A549 (cell line): ENCODE measurements at regions of chr15 and their contacts with region 1.

Region 1: DNA sequence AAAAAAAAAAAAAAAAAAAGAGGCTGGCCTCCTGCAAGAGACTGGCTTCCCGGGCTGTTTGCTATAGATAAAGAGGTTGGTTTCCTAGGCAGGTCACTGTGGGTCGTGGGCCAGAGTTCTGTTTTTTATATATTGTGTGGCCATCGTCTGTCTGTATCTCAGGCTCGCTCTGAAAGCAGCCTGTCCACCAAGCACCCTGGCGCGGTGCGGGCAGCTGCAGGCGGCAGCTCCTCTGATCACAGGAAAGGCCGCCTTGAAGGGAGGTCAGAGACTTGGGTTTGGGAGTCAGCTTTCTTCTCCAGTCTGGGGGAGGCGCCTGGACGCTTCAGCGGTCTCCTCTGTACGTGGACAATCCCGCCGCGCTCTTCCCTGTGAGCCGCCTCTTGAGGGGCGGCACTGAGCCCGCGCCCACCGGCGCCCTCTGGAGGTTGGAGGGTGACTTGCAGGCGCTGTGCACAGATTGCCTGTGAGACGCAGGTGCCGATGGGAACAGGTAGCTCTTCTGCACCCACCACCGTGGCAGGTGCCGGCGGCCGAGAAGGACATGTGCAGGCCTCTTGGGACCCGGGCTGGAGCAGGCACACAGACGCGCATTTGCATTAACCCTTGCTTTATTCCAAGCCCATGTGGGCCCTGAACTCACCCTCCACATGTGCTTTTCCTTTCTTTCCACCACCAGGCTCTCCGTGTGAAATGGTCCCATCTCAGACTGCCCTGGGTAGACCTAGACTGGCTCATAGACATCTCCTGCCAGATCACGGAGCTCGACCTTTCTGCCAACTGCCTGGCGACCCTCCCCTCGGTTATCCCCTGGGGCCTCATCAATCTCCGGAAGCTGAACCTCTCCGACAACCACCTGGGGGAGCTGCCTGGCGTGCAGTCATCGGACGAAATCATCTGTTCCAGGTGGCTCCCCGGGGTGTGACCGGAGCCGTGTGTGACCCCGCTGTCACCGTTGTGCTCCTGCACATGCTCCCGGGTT is 89.3 kb downstream of the LRRK1 start:
- DNase-seq: peak; percentile 87 to 89
- ATAC-seq: peak; percentile 86 to 92
- H3K4me3 ChIP-seq: peak overlapping the region; percentile 55
- H3K27ac ChIP-seq: peak overlapping the region; percentile 81 to 82
- H3K4me1 ChIP-seq: peaks cover 13% of the 10 kb centered on the region; the same call in 2 of the 3 replicates
- CTCF ChIP-seq: peak; percentile 94
- EP300 ChIP-seq: no peak
- POLR2A ChIP-seq: peak; percentile 52
- RAD21 ChIP-seq: peak; percentile 58 to 59

Region 2: GRCh38 chr15:100635406-100636071 is 372.9 kb before region 1 on chr15:
- CTCF ChIA-PET with region 1: interaction called, 35 read pairs
- POLR2A ChIA-PET with region 1: interaction called, 4 read pairs
- DNase-seq: no peak
- ATAC-seq: no peak; a peak in 1 of 6 replicates
- H3K4me3 ChIP-seq: no peak overlapping the region
- H3K27ac ChIP-seq: no peak overlapping the region
- H3K4me1 ChIP-seq: no peaks in the 10 kb centered on the region
- CTCF ChIP-seq: no peak
- EP300 ChIP-seq: no peak
- POLR2A ChIP-seq: no peak
- RAD21 ChIP-seq: no peak

Region 3: GRCh38 chr15:100849252-100850171 is 158.9 kb before region 1 on chr15:
- CTCF ChIA-PET with region 1: interaction called, 11 read pairs
- POLR2A ChIA-PET with region 1: no interaction called
- DNase-seq: peak; percentile 82 to 96
- ATAC-seq: peak; percentile 98 to 99
- H3K4me3 ChIP-seq: peak overlapping the region; percentile 70
- H3K27ac ChIP-seq: peak overlapping the region; percentile 82 to 90
- H3K4me1 ChIP-seq: 0 out of 3 replicates have a peak, but pooled peaks cover 3% of the 10 kb centered on the region
- CTCF ChIP-seq: peak; percentile 63
- EP300 ChIP-seq: no peak
- POLR2A ChIP-seq: peak; percentile 77
- RAD21 ChIP-seq: peak; percentile 51 to 65

Region 4: GRCh38 chr15:100902436-100903167 is 105.8 kb before region 1 on chr15:
- CTCF ChIA-PET with region 1: interaction called, 69 read pairs
- POLR2A ChIA-PET with region 1: no interaction called
- DNase-seq: no peak
- ATAC-seq: no peak; a peak in 1 of 6 replicates
- H3K4me3 ChIP-seq: no peak overlapping the region
- H3K27ac ChIP-seq: no peak overlapping the region
- H3K4me1 ChIP-seq: no peaks in the 10 kb centered on the region
- CTCF ChIP-seq: no peak
- EP300 ChIP-seq: no peak
- POLR2A ChIP-seq: no peak
- RAD21 ChIP-seq: no peak

Region 5: GRCh38 chr15:100968050-100968966 is 40.1 kb before region 1 on chr15:
- CTCF ChIA-PET with region 1: interaction called, 26 read pairs
- POLR2A ChIA-PET with region 1: no interaction called
- DNase-seq: no peak
- ATAC-seq: no peak; a peak in 1 of 6 replicates
- H3K4me3 ChIP-seq: no peak overlapping the region
- H3K27ac ChIP-seq: no peak overlapping the region
- H3K4me1 ChIP-seq: peaks cover 5% of the 10 kb centered on the region; the same call in 1 of the 3 replicates
- CTCF ChIP-seq: no peak
- EP300 ChIP-seq: no peak
- POLR2A ChIP-seq: no peak
- RAD21 ChIP-seq: no peak

Region 6: DNA sequence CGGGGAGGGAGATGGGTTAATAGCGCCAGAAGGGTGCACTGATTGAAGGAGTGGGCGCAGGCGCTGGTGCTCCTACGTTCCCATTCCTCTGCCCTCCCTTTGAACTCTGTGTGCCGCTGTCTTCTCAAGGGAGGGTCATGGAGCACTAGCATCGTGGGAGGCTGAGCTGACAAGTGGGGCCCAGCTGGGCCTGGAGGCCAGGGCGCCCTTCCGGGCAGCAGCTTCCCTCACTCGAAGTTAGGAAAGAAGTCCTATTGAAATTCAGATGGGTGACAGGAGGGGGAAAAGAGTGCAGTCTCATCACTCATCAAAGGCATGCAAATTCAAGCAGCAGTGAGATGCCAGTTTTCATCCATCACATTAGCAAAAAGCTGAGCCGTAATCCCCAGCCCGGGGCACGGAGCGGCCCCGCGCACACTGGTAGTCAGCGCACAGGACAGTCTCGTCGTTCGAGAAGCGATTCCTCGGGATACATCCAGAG is 38.9 kb after region 1 on chr15:
- CTCF ChIA-PET with region 1: interaction called, 12 read pairs
- POLR2A ChIA-PET with region 1: no interaction called
- DNase-seq: no peak
- ATAC-seq: no peak
- H3K4me3 ChIP-seq: no peak overlapping the region
- H3K27ac ChIP-seq: no peak overlapping the region
- H3K4me1 ChIP-seq: no peaks in the 10 kb centered on the region
- CTCF ChIP-seq: no peak
- EP300 ChIP-seq: no peak
- POLR2A ChIP-seq: no peak
- RAD21 ChIP-seq: no peak